ENCODE measurements at regions of chr2 and their contacts with region 1.

Region 1: DNA sequence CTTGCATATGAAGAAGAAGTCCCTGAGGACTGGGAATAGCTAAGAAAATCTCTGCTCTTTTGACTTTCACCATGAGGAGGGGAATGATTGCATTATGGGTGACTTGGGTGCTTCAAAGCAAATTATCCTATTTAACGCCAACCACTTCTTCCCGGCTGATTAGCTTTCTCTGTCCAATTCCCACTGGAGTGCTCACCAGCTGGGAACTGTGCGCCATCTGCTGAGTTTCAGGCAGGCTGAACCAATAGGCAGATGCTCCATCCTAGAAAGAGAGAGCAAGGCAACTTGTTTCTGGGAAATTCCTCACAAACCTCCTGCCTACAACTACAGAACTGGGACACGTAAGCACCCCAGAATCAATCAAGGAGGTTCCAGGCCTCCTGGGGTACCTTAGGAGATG is 49.4 kb downstream of the POLE4 start:
- DNase-seq: no peak
- H3K4me3 ChIP-seq: no peak overlapping the region
- H3K27ac ChIP-seq: no peak overlapping the region
- H3K4me1 ChIP-seq: no peaks in the 10 kb centered on the region
- H3K27me3 ChIP-seq: no peaks in the 10 kb centered on the region
- CTCF ChIP-seq: no peak
- EP300 ChIP-seq: no peak
- POLR2A ChIP-seq: no peak
- RAD21 ChIP-seq: peak in 1 of 2 experiments; percentile 16; a peak in 2 of 4 replicates

Region 2: GRCh38 chr2:74862020-74862964 is 145.5 kb before region 1 on chr2:
- CTCF ChIA-PET with region 1: no interaction called
- POLR2A ChIA-PET with region 1: no interaction called
- DNase-seq: no peak
- H3K4me3 ChIP-seq: no peak overlapping the region
- H3K27ac ChIP-seq: no peak overlapping the region
- H3K4me1 ChIP-seq: peaks cover 0 to 8% (median 6%) of the 10 kb centered on the region in 4 experiments; a peak in 5 of 7 replicates
- H3K27me3 ChIP-seq: no peaks in the 10 kb centered on the region
- CTCF ChIP-seq: no peak
- EP300 ChIP-seq: no peak
- POLR2A ChIP-seq: no peak
- RAD21 ChIP-seq: no peak

Region 3: GRCh38 chr2:75018162-75018561 is 10.3 kb after region 1 on chr2:
- CTCF ChIA-PET with region 1: interaction called, 11 read pairs
- POLR2A ChIA-PET with region 1: interaction called, 4 read pairs
- DNase-seq: no peak
- H3K4me3 ChIP-seq: no peak overlapping the region
- H3K27ac ChIP-seq: no peak overlapping the region
- H3K4me1 ChIP-seq: no peaks in the 10 kb centered on the region; a peak in 1 of 7 replicates
- H3K27me3 ChIP-seq: no peaks in the 10 kb centered on the region
- CTCF ChIP-seq: no peak
- EP300 ChIP-seq: no peak
- POLR2A ChIP-seq: no peak
- RAD21 ChIP-seq: no peak